ENCODE measurements at regions of chr18 and their contacts with region 1.

Region 1: DNA sequence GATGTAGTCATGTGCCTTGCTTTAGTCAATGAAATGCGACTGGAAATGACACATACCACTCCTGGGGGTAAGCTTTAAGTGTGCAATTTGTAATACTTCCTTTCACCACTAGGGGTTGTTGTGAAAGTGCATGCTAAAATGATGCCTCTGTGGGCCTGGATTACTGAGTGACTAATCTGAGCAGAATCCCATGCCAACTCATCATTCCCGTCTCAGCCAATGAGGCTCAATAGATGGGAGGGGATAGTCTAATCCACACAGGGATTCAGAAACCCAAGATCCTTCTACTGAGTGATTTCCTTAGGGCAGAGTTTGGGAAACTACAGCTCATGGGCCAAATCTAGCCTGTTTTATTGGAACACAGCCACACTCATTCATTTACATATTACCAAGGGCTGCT is 54.0 kb downstream of the HRH4 start:
- DNase-seq: no peak
- ATAC-seq: peak; percentile 89
- H3K4me3 Mint-ChIP-seq: no peak overlapping the region
- H3K27ac Mint-ChIP-seq: no peak overlapping the region
- H3K4me1 Mint-ChIP-seq: no peaks in the 10 kb centered on the region
- H3K27me3 Mint-ChIP-seq: no peaks in the 10 kb centered on the region
- CTCF ChIP-seq: peak; percentile 82

Region 2: GRCh38 chr18:24502644-24503523 is 11.6 kb before region 1 on chr18:
- CTCF ChIA-PET with region 1: interaction called, 12 read pairs
- POLR2A ChIA-PET with region 1: no interaction called
- intact Hi-C with region 1: no loop called
- DNase-seq: no peak
- ATAC-seq: no peak
- H3K4me3 Mint-ChIP-seq: no peak overlapping the region
- H3K27ac Mint-ChIP-seq: no peak overlapping the region
- H3K4me1 Mint-ChIP-seq: no peaks in the 10 kb centered on the region
- H3K27me3 Mint-ChIP-seq: peaks cover 3% of the 10 kb centered on the region
- CTCF ChIP-seq: no peak

Region 3: GRCh38 chr18:24530630-24531111 is 16.2 kb after region 1 on chr18:
- CTCF ChIA-PET with region 1: interaction called, 11 read pairs
- POLR2A ChIA-PET with region 1: no interaction called
- intact Hi-C with region 1: no loop called
- DNase-seq: peak; percentile 41
- ATAC-seq: peak; percentile 83
- H3K4me3 Mint-ChIP-seq: no peak overlapping the region
- H3K27ac Mint-ChIP-seq: no peak overlapping the region
- H3K4me1 Mint-ChIP-seq: peaks cover 7% of the 10 kb centered on the region
- H3K27me3 Mint-ChIP-seq: peaks cover 26% of the 10 kb centered on the region
- CTCF ChIP-seq: no peak